Ovary (tissue), 10 donors: ENCODE measurements at regions of chr5 and their contacts with region 1.

Region 1: DNA sequence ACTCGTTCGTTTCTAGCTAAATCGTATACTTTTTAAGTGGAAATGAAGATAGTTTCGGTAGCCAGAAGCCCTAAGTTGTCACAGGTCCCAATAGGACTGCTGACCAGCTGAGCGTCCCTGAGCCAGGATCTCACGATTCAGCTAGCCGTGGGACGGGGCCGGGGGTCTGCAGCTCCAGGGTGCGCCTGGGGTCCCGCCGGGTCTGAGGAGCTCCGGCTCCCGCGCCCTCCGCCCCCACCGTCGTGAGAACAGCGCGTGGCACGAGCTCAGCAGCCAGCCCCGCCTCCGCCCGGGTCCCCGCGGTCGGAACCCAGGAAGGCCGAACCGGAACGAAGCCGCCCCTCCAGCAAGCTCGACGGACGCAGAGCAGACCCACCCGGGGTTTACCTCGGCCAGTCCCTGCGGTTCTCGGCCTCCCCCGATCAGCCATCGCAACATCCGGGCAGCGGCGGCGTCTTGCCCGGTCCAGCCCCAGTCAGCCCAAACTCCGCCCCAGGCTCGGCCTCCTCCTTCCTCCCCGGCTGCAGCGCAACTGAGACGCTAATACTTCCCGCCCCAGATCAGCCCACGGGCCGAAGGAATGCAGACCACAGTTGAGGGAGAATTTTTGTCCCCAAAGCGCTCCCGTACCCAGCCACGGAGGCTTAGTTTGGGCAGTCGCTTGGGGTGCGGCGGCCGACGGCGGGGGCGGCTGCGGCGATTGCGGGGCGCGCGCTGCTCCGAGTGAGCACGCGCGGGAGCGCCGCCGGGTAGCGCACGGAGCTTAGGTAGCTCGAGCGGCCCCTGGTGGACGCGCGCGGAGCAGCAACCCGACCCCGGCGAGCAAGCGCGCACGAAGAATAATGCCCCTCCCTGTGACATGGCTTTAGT is at the start of gene WDR41:
- DNase-seq: peak; percentile 88 to 93 (median 88)
- H3K4me3 ChIP-seq: peak within 1 kb of the TSS; percentile 88
- H3K27ac ChIP-seq: peak within 1 kb of the TSS; percentile 79 to 93
- H3K4me1 ChIP-seq: no peaks in the 10 kb centered on the region
- H3K27me3 ChIP-seq: no peaks in the 10 kb centered on the region
- CTCF ChIP-seq: peak; percentile 91 to 96 (median 94)
- EP300 ChIP-seq: no peak
- POLR2A ChIP-seq: peak; percentile 35
- total RNA-seq, gene WDR41: 24.5 to 45.4 (median 31.9) TPM

Region 2: GRCh38 chr5:76608833-76609232 is 883.2 kb before region 1 on chr5:
- intact Hi-C with region 1: no loop called
- DNase-seq: no peak
- H3K4me3 ChIP-seq: no peak overlapping the region
- H3K27ac ChIP-seq: no peak overlapping the region
- H3K4me1 ChIP-seq: peaks cover 3% of the 10 kb centered on the region
- H3K27me3 ChIP-seq: no peaks in the 10 kb centered on the region
- CTCF ChIP-seq: no peak
- EP300 ChIP-seq: no peak
- POLR2A ChIP-seq: no peak

Region 3: DNA sequence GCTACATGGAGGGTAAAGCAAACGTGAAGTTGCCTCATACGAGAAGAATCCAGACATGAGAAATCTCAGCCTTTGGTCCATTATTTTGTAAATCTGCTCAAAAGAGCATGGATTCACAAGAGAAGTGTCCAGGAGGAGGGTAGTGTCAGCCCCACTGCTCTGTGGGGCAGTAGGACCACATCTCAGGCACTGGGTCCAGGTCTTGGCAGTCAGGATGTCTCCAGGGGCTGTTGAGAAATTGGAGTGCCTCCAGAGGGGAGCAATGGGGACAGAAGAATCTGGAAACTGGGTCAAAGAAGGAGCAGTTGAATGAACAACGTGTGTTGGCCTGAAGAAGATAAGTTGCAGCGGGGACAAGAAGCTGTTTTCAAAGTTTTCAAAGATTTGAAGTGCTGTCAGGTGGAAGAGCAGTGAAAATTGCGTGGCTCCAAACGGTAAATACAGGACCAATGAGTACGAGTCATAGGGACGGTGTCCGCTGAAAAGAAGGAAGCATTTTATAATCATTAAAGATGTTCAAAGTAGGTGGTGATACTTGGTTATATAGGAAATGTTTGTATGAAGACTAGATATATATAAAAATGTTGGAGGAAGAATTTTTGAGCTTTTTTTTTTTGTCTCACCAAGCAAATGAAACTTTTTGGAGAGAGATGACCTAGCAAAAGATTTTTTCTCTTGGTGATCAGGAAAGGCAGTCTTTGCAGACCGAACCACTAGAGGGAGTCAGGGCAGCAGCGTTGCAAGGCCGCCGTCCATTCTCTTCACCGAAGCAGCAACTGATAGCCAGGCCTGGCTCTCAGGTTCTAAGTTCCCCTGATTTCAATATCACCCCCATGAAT is 347.8 kb before region 1 on chr5:
- intact Hi-C with region 1: loop called in 3 of 4 experiments (anchors 1 to 10 kb)
- DNase-seq: peak; percentile 60 to 71 (median 68)
- H3K4me3 ChIP-seq: no peak overlapping the region
- H3K27ac ChIP-seq: no peak overlapping the region
- H3K4me1 ChIP-seq: no peaks in the 10 kb centered on the region
- H3K27me3 ChIP-seq: no peaks in the 10 kb centered on the region
- CTCF ChIP-seq: peak; percentile 29 to 54 (median 36)
- EP300 ChIP-seq: no peak
- POLR2A ChIP-seq: no peak

Region 4: DNA sequence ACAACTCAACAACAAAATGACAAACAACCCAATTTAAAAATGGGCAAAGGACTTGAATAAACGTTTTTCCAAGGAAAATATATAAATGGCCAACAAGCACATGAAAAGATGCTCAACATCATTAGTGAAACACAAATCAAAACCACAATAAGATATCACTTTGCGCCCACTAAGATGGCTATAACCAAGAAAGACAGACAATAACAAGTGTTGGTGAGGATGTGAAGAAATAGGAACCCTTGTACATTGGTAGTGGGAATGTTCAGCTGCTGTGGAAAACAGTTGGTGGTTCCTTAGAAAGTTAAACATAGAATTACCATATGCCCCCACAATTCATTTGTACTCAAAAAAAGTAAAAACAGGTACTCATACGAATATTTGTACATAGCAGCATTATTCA is 39.3 kb after region 1 on chr5:
- intact Hi-C with region 1: no loop called
- DNase-seq: no peak
- H3K4me3 ChIP-seq: no peak overlapping the region
- H3K27ac ChIP-seq: no peak overlapping the region
- H3K4me1 ChIP-seq: no peaks in the 10 kb centered on the region
- H3K27me3 ChIP-seq: no peaks in the 10 kb centered on the region
- CTCF ChIP-seq: no peak
- EP300 ChIP-seq: no peak
- POLR2A ChIP-seq: no peak